Endothelial cell of umbilical vein (primary cell): ENCODE measurements at regions of chr6 and their contacts with region 1.

Region 1: GRCh38 chr6:81826785-81827184 is 74.3 kb upstream of the TENT5A start:
- DNase-seq: no peak
- H3K4me3 ChIP-seq: no peak overlapping the region
- H3K27ac ChIP-seq: no peak overlapping the region
- H3K4me1 ChIP-seq: no peaks in the 10 kb centered on the region
- H3K27me3 ChIP-seq: no peaks in the 10 kb centered on the region
- CTCF ChIP-seq: no peak
- POLR2A ChIP-seq: no peak

Region 2: DNA sequence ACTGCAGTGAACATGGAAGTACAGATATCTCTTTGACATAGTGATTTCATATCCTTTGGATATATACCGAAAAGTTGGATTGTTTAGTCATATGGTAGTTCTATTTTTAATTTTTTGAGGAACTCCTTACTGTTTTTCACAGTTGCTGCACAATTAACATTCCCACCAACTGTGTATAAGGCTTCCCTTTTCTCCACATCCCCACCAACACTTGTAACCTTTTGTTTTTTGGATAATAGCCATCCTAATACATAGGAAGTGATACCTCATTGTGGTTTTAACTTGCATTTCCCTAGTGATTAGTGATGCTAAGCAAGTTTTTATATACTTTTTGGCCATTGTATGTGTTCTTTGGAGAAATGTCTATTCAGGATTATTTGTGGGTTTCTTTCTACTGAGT is 29.2 kb before region 1 on chr6:
- CTCF ChIA-PET with region 1: no interaction called
- POLR2A ChIA-PET with region 1: no interaction called
- dilution Hi-C with region 1: no loop called
- intact Hi-C with region 1: no loop called
- DNase-seq: peak; percentile 58
- H3K4me3 ChIP-seq: no peak overlapping the region
- H3K27ac ChIP-seq: peak overlapping the region; percentile 7
- H3K4me1 ChIP-seq: peaks cover 17% of the 10 kb centered on the region
- H3K27me3 ChIP-seq: no peaks in the 10 kb centered on the region
- CTCF ChIP-seq: no peak
- POLR2A ChIP-seq: no peak

Region 3: GRCh38 chr6:81876971-81877370 is 50.2 kb after region 1 on chr6:
- CTCF ChIA-PET with region 1: no interaction called
- POLR2A ChIA-PET with region 1: no interaction called
- dilution Hi-C with region 1: no loop called
- intact Hi-C with region 1: loop called (anchors 5 kb)
- DNase-seq: no peak
- H3K4me3 ChIP-seq: no peak overlapping the region
- H3K27ac ChIP-seq: no peak overlapping the region
- H3K4me1 ChIP-seq: no peaks in the 10 kb centered on the region
- H3K27me3 ChIP-seq: no peaks in the 10 kb centered on the region
- CTCF ChIP-seq: no peak
- POLR2A ChIP-seq: no peak

Region 4: GRCh38 chr6:82607998-82608725 is 781.4 kb after region 1 on chr6:
- CTCF ChIA-PET with region 1: no interaction called
- POLR2A ChIA-PET with region 1: no interaction called
- dilution Hi-C with region 1: no loop called
- intact Hi-C with region 1: no loop called
- DNase-seq: no peak
- H3K4me3 ChIP-seq: no peak overlapping the region
- H3K27ac ChIP-seq: no peak overlapping the region
- H3K4me1 ChIP-seq: no peaks in the 10 kb centered on the region
- H3K27me3 ChIP-seq: no peaks in the 10 kb centered on the region
- CTCF ChIP-seq: no peak
- POLR2A ChIP-seq: no peak